WTC11 (cell line): ENCODE measurements at regions of chr9 and their contacts with region 1.

Region 1: GRCh38 chr9:33452828-33453271 is 5.5 kb upstream of the AQP3 start:
- DNase-seq: peak; percentile 88
- ATAC-seq: peak; percentile 97
- H3K4me3 Mint-ChIP-seq: no peak overlapping the region
- H3K27ac Mint-ChIP-seq: no peak overlapping the region; the same call in 1 of the 2 replicates
- H3K4me1 Mint-ChIP-seq: peaks cover 16% of the 10 kb centered on the region
- H3K27me3 Mint-ChIP-seq: peaks cover 10% of the 10 kb centered on the region
- CTCF ChIP-seq: peak; percentile 62

Region 2: GRCh38 chr9:33374634-33375213 is 78.1 kb before region 1 on chr9:
- CTCF ChIA-PET with region 1: interaction called, 110 read pairs
- POLR2A ChIA-PET with region 1: no interaction called
- DNase-seq: peak; percentile 81
- ATAC-seq: peak; percentile 87
- H3K4me3 Mint-ChIP-seq: peak overlapping the region; percentile 52
- H3K27ac Mint-ChIP-seq: peak overlapping the region; percentile 65
- H3K4me1 Mint-ChIP-seq: peaks cover 31% of the 10 kb centered on the region
- H3K27me3 Mint-ChIP-seq: no peaks in the 10 kb centered on the region
- CTCF ChIP-seq: peak; percentile 71

Region 3: GRCh38 chr9:33415501-33416038 is 37.3 kb before region 1 on chr9:
- CTCF ChIA-PET with region 1: interaction called, 84 read pairs
- POLR2A ChIA-PET with region 1: interaction called, 3 read pairs
- DNase-seq: peak; percentile 88
- ATAC-seq: peak; percentile 95
- H3K4me3 Mint-ChIP-seq: no peak overlapping the region
- H3K27ac Mint-ChIP-seq: no peak overlapping the region
- H3K4me1 Mint-ChIP-seq: peaks cover 7% of the 10 kb centered on the region
- H3K27me3 Mint-ChIP-seq: no peaks in the 10 kb centered on the region
- CTCF ChIP-seq: peak; percentile 51

Region 4: GRCh38 chr9:33466565-33467495 is 14.0 kb after region 1 on chr9:
- CTCF ChIA-PET with region 1: interaction called, 66 read pairs
- POLR2A ChIA-PET with region 1: no interaction called
- DNase-seq: peak; percentile 88
- ATAC-seq: peak; percentile 93
- H3K4me3 Mint-ChIP-seq: no peak overlapping the region
- H3K27ac Mint-ChIP-seq: no peak overlapping the region
- H3K4me1 Mint-ChIP-seq: no peaks in the 10 kb centered on the region
- H3K27me3 Mint-ChIP-seq: no peaks in the 10 kb centered on the region
- CTCF ChIP-seq: peak; percentile 97